Left lung (tissue), 14 donors: ENCODE measurements at regions of chrX and their contacts with region 1.

Region 1: DNA sequence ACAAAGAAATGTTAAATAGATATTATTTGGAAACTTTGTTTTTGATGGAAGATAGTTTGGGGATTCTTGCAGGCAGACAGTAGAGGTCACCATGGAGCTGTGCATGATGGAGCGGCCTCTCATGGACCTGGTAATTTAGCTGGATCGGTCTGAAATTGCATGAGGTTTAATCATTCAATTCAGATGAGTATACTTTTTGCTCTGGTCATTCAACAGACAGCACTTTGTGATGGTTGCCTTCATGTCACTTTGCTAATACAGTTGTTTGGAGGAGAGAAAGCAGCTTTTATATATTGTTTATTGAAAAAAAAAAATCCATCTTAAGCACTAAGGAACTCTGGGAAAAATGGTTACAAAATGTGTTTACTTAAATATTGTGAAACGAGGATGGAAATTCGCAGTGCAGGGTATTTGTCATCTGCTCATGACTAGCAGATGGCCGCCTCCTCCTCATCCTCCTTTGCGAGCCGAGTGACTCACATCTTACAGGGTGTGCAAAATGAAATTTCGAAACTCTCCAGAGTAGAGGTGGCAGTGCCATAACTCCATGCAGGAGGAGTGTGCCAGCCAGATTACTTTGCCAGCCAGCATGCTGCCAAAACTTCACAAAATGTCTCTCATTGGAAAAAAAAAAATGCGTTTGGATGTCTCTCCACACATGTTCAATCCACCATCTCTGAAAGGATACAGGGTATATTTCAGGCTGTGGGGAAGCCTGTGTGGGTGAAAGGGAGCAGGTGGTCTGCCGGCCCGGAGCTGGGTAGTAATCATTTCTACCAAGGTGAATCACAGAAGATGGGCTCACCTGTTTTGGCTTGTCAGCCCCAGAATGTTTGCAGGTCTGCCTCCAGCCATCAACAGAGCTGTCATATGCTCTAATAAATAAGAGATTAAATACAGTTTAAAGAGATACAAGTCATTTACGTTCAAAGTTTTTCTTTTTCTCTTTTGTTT is 314.9 kb upstream of the DIPK2B start:
- DNase-seq: peak in 3 of 4 donors; percentile 49 to 71 (median 65)
- ATAC-seq: peak; percentile 95
- H3K4me3 ChIP-seq: no peak overlapping the region
- H3K27ac ChIP-seq: peak overlapping the region in 1 of 2 donors; percentile 35
- H3K4me1 ChIP-seq: no peaks in the 10 kb centered on the region
- H3K27me3 ChIP-seq: no peaks in the 10 kb centered on the region
- CTCF ChIP-seq: peak in 1 of 2 donors; percentile 39

Region 2: GRCh38 chrX:45689971-45690370 is 174.4 kb after region 1 on chrX:
- intact Hi-C with region 1: no loop called
- DNase-seq: no peak
- ATAC-seq: no peak
- H3K4me3 ChIP-seq: no peak overlapping the region
- H3K27ac ChIP-seq: no peak overlapping the region
- H3K4me1 ChIP-seq: no peaks in the 10 kb centered on the region
- H3K27me3 ChIP-seq: no peaks in the 10 kb centered on the region
- CTCF ChIP-seq: no peak

Region 3: GRCh38 chrX:45758319-45758718 is 242.8 kb after region 1 on chrX:
- intact Hi-C with region 1: loop called in 1 of 2 experiments (anchors 10 kb)
- DNase-seq: no peak
- ATAC-seq: peak; percentile 43
- H3K4me3 ChIP-seq: no peak overlapping the region
- H3K27ac ChIP-seq: peak overlapping the region; percentile 40 to 86
- H3K4me1 ChIP-seq: peaks cover 7 to 89% of the 10 kb centered on the region in 2 donors
- H3K27me3 ChIP-seq: no peaks in the 10 kb centered on the region
- CTCF ChIP-seq: no peak